ENCODE measurements at regions of chr17 and their contacts with region 1.

Region 1: GRCh38 chr17:75295201-75296158 is 6.2 kb upstream of the SLC25A19 start:
- DNase-seq: peak; percentile 58
- H3K4me3 Mint-ChIP-seq: peak overlapping the region; percentile 37
- H3K27ac Mint-ChIP-seq: peak overlapping the region; percentile 99
- H3K4me1 Mint-ChIP-seq: peaks cover 35% of the 10 kb centered on the region
- H3K27me3 Mint-ChIP-seq: no peaks in the 10 kb centered on the region

Region 2: DNA sequence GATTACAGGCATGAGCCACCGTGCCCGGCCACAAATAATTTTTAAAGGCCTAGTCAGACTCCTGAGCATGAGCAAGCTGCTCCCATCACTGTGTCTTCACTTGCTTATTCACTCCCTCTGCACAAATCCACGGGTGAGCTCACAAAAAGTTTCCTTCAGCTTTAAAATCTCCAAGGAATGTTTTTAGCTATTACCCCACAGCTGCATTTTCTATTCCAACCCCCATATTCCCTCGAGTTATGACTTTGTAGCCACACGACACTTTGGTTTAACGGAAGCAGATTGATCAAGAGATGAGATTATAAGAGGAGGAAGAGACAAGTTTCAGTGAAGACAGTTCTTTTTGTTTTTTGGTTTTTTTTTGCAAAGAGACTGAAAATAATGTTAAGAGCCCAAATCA is 42.9 kb after region 1 on chr17:
- CTCF ChIA-PET with region 1: no interaction called
- POLR2A ChIA-PET with region 1: no interaction called
- intact Hi-C with region 1: loop called (anchors 2 kb)
- DNase-seq: peak; percentile 37
- H3K4me3 Mint-ChIP-seq: peak overlapping the region; percentile 33
- H3K27ac Mint-ChIP-seq: peak overlapping the region; percentile 74
- H3K4me1 Mint-ChIP-seq: peaks cover 78% of the 10 kb centered on the region
- H3K27me3 Mint-ChIP-seq: no peaks in the 10 kb centered on the region

Measured in activated CD4-positive, alpha-beta memory T cell treated with anti-CD3 and anti-CD28 coated beads for 36 hours (primary cell).